Prostate gland (tissue), 2 donors: ENCODE measurements at regions of chr14 and their contacts with region 1.

Region 1: DNA sequence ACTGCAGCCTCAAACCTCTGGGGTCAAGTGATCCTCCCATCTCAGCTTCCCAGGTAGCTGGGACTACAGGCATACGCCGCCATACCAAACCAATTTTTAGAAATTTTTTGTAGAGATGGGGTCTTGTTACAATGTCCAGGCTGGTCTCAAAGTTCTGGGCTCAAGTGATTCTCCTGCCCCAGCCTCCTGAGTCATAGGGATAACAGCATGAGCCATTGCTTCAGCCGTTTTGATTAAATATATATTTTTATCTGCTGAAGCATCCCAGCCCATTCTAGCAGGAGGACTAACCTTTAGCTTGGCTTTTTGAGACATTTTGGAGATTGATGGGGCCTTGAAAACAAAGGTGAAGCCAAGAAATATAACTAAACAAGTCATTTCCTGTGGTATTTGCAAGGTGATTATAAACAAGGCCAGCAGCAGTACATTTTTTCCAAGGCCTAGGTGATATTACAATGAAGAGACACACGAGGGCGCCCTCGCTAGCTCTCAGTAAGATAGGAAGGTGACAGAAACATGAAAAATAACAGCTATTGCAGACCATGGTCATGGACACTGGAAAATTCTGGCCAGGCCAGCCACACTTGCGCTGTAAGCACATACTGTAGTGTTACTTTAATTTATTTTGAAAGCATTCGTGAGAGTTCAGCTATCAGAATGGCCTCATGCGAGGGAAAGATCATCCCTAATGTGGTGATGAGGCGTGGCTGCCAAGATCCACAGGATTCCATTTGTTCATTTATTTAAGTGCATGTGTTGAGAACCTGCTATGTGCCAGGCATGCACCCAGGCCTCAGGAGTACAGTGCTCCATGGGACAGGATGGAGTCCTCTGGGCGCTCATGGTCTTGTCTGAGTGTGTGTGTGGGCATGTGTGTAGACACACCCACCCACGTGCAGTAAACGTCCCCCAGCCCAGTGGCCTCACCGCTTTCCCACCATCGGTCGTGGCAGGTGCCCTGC is 63.5 kb downstream of the DGLUCY start:
- DNase-seq: peak; percentile 62
- H3K4me3 ChIP-seq: no peak overlapping the region
- H3K27ac ChIP-seq: no peak overlapping the region
- H3K4me1 ChIP-seq: no peaks in the 10 kb centered on the region
- H3K27me3 ChIP-seq: no peaks in the 10 kb centered on the region
- CTCF ChIP-seq: peak; percentile 49 to 84 (median 80)
- POLR2A ChIP-seq: no peak

Region 2: GRCh38 chr14:90903101-90903500 is 274.3 kb before region 1 on chr14:
- intact Hi-C with region 1: loop called (anchors 2 kb)
- DNase-seq: peak; percentile 44
- H3K4me3 ChIP-seq: no peak overlapping the region
- H3K27ac ChIP-seq: no peak overlapping the region
- H3K4me1 ChIP-seq: no peaks in the 10 kb centered on the region
- H3K27me3 ChIP-seq: no peaks in the 10 kb centered on the region
- CTCF ChIP-seq: peak in 3 of 4 experiments; percentile 64 to 82 (median 76)
- POLR2A ChIP-seq: no peak

Region 3: DNA sequence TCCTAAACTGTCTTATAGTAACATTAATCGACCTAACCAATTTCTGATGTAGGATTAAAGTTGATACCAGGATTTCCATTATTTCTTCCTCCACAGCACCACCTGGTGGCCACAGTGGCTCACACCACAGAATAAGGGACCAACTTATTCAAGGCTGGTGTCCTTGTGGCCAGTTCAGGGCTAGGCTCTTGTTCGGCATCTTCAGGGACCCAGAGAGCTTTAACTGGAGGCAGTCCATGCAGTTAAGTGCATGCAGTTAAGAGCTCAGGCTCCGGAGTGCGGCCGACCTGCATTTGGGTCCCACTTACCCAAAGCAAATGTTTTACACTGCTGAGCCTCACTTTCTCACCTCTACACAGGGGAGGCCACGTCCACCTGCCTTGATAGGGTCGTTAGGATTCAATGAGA is 109.2 kb after region 1 on chr14:
- intact Hi-C with region 1: loop called (anchors 1 kb)
- DNase-seq: peak; percentile 75
- H3K4me3 ChIP-seq: no peak overlapping the region
- H3K27ac ChIP-seq: no peak overlapping the region
- H3K4me1 ChIP-seq: no peaks in the 10 kb centered on the region
- H3K27me3 ChIP-seq: no peaks in the 10 kb centered on the region
- CTCF ChIP-seq: peak; percentile 91 to 97 (median 92)
- POLR2A ChIP-seq: no peak